Esophagus muscularis mucosa (tissue), 4 donors: ENCODE measurements at regions of chr3 and their contacts with region 1.

Region 1: GRCh38 chr3:11385891-11386290 is 113.7 kb downstream of the ATG7 start:
- DNase-seq: no peak
- H3K4me3 ChIP-seq: no peak overlapping the region
- H3K27ac ChIP-seq: peak overlapping the region in 2 of 4 donors; percentile 39 to 58
- H3K4me1 ChIP-seq: peaks cover 21 to 26% (median 24%) of the 10 kb centered on the region in 4 donors
- H3K27me3 ChIP-seq: no peaks in the 10 kb centered on the region
- CTCF ChIP-seq: no peak
- EP300 ChIP-seq: no peak
- POLR2A ChIP-seq: no peak

Region 2: DNA sequence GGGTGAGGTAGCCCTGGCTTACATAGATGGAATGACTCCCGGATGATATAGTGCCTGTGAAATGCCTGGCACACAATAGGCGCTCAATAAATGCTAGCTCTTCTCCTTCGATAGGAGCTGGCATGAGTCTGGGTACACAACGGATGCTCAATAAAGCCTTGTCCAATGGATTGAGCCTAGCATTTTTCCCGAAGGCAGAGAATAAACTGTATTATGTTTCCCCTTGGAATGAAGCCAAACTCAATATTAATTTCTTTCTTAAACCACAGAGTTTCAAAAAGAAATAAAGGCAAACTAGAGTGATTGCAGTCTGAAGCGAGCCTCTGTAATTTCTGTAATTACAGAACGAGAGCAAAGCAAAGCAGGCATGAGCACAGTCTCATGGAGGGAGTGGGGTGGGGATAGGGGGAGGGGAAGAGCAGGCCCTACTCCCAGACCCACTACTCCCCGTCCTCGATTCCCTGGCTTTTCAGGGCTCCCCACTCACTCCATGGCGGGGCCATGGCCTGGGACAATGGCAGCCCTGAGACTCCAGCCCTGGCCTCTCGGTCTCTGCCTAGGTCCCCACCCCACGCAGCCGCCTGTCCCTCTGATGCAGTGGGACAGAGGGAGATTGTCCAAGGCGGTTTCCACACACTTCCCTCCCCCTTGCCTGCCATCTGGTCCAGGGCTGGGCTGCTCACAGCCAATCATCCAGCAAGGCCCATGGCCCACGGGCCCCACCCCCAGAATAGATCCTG is 375.3 kb before region 1 on chr3:
- intact Hi-C with region 1: no loop called
- DNase-seq: no peak
- H3K4me3 ChIP-seq: no peak overlapping the region
- H3K27ac ChIP-seq: no peak overlapping the region
- H3K4me1 ChIP-seq: no peaks in the 10 kb centered on the region
- H3K27me3 ChIP-seq: peaks cover 0 to 37% (median 0%) of the 10 kb centered on the region in 4 donors
- CTCF ChIP-seq: no peak
- EP300 ChIP-seq: no peak
- POLR2A ChIP-seq: no peak

Region 3: GRCh38 chr3:11530153-11530721 is 144.3 kb after region 1 on chr3:
- intact Hi-C with region 1: loop called (anchors 10 kb)
- DNase-seq: no peak
- H3K4me3 ChIP-seq: no peak overlapping the region
- H3K27ac ChIP-seq: peak overlapping the region in 3 of 4 donors; percentile 5 to 41 (median 36)
- H3K4me1 ChIP-seq: peaks cover 7 to 38% (median 34%) of the 10 kb centered on the region in 4 donors
- H3K27me3 ChIP-seq: no peaks in the 10 kb centered on the region
- CTCF ChIP-seq: peak in 1 of 3 experiments; percentile 20
- EP300 ChIP-seq: no peak
- POLR2A ChIP-seq: no peak